Activated CD4-positive, alpha-beta T cell treated with anti-CD3 and anti-CD28 coated beads for 36 hours (primary cell): ENCODE measurements at regions of chr18 and their contacts with region 1.

Region 1: GRCh38 chr18:79819968-79820351 is 22.2 kb downstream of the KCNG2 start:
- DNase-seq: no peak
- ATAC-seq: no peak
- H3K4me3 Mint-ChIP-seq: no peak overlapping the region
- H3K27ac Mint-ChIP-seq: no peak overlapping the region
- H3K4me1 Mint-ChIP-seq: peaks cover 7% of the 10 kb centered on the region
- H3K27me3 Mint-ChIP-seq: peaks cover 6% of the 10 kb centered on the region

Region 2: DNA sequence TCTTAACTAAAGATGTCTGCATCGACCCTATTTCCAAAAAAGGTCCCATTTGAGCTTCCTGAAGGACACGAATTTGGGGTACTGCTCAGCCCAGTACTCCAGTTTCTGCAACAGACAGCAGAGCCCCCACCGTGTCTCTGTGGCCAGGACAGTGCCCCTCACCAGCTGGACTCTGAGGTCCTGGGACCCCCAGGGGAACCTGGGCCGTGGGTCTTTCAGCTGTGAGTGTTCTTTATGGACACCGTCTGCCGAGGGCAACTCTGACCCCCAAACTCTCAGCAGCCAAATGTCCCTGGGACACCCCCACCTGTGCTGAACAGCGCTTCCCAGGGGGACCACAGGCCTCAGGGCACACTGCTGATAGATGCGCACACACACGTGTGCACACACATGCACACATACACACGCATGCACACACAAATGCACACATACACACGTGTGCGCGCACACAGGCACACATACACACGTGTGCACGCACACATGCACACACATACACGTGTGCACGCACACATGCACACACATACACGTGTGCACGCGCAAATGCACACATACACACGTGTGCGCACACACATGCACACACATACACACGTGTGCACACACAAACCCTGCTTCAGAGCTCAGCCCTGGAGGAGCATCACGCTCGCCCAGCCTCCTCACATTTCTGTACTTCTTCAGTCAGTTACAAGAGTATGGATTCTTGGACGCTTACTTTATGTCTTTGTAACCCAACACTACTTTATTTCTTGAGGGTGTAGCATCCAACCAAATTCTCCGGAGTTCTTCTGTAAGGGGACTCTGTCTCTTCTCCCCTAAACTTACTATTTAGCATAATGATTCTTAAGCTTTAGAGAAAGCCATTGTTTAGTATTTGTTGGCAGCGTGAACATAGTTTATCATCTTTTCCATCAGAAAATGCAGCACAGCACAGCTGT is 215.1 kb before region 1 on chr18:
- CTCF ChIA-PET with region 1: no interaction called
- POLR2A ChIA-PET with region 1: no interaction called
- intact Hi-C with region 1: loop called in 1 of 2 experiments (anchors 10 kb)
- DNase-seq: no peak
- ATAC-seq: no peak
- H3K4me3 Mint-ChIP-seq: no peak overlapping the region
- H3K27ac Mint-ChIP-seq: no peak overlapping the region
- H3K4me1 Mint-ChIP-seq: peaks cover 5% of the 10 kb centered on the region
- H3K27me3 Mint-ChIP-seq: no peaks in the 10 kb centered on the region